ENCODE measurements at regions of chr18 and their contacts with region 1.

Region 1: GRCh38 chr18:63439334-63439733 is 17.1 kb upstream of the VPS4B start:
- DNase-seq: peak in 1 of 2 donors; percentile 52
- ATAC-seq: peak in 7 of 8 donors; percentile 54 to 77 (median 69)
- H3K4me3 ChIP-seq: no peak overlapping the region
- H3K27ac ChIP-seq: no peak overlapping the region
- H3K4me1 ChIP-seq: peaks cover 0 to 16% (median 0%) of the 10 kb centered on the region in 9 donors
- H3K27me3 ChIP-seq: peaks cover 0 to 7% (median 0%) of the 10 kb centered on the region in 7 donors
- CTCF ChIP-seq: peak; percentile 54 to 88 (median 83)

Region 2: DNA sequence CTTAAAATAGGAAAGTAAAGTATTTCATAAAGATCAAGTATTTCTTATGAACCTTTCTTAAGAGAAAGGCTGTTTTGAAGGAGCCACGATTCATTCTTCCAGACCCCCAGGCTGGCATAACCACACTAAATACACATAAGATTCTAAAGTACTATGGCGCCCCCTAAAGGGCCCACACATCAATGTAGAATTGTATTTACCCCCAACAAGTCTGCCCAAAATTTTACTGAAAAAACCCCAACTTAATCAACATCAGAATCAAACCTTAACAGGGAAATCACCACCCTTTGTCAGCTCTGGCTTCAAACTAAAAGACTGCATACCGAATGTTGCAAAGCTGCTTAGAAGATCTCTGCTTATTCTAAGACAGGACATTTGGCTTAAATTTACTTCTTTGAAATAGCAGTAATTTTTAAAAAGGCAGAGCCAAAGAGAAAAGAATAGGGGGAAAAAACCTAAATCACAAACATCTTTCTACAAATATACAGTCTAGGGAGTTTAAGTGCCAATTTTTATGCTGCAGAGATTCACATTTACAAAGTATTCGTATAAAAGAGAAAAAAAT is 99.3 kb before region 1 on chr18:
- intact Hi-C with region 1: loop called in 9 of 10 experiments (anchors 1 to 5 kb)
- DNase-seq: no peak
- ATAC-seq: no peak
- H3K4me3 ChIP-seq: no peak overlapping the region
- H3K27ac ChIP-seq: no peak overlapping the region
- H3K4me1 ChIP-seq: peaks cover 0 to 8% (median 4%) of the 10 kb centered on the region in 9 donors
- H3K27me3 ChIP-seq: no peaks in the 10 kb centered on the region
- CTCF ChIP-seq: peak; percentile 10 to 65 (median 56)

Region 3: DNA sequence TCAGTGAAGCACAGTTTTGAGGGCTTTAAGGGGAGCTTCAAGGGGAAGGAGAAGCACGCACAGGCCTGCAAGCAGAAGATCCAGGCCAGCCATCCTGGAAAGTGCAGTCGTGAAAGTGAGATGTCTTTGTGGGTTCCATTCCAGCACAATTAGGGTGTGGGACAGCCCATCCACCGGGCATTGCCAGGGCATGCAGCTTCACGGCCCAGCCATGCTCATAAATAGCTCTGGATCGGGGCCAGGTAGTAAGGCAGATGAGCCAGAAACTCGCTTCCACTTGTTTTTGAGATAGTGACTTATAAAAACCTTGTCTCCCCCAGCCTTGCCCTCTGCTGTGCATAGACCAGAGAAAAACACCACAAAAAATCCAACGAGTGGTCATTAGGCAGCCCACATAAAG is 93.3 kb before region 1 on chr18:
- intact Hi-C with region 1: loop called in 9 of 10 experiments (anchors 1 to 5 kb)
- DNase-seq: peak; percentile 38 to 70
- ATAC-seq: peak in 7 of 8 donors; percentile 47 to 92 (median 85)
- H3K4me3 ChIP-seq: no peak overlapping the region
- H3K27ac ChIP-seq: peak overlapping the region; percentile 28 to 82 (median 58)
- H3K4me1 ChIP-seq: peaks cover 0 to 32% (median 13%) of the 10 kb centered on the region in 9 donors
- H3K27me3 ChIP-seq: no peaks in the 10 kb centered on the region
- CTCF ChIP-seq: no peak

Region 4: GRCh38 chr18:63378919-63379638 is 60.3 kb before region 1 on chr18:
- intact Hi-C with region 1: no loop called
- DNase-seq: no peak
- ATAC-seq: no peak
- H3K4me3 ChIP-seq: no peak overlapping the region
- H3K27ac ChIP-seq: no peak overlapping the region
- H3K4me1 ChIP-seq: peaks cover 0 to 10% (median 0%) of the 10 kb centered on the region in 9 donors
- H3K27me3 ChIP-seq: no peaks in the 10 kb centered on the region
- CTCF ChIP-seq: no peak

Region 5: GRCh38 chr18:63578357-63578958 is 139.1 kb after region 1 on chr18:
- intact Hi-C with region 1: no loop called
- DNase-seq: no peak
- ATAC-seq: no peak
- H3K4me3 ChIP-seq: no peak overlapping the region
- H3K27ac ChIP-seq: no peak overlapping the region
- H3K4me1 ChIP-seq: peaks cover 0 to 2% (median 0%) of the 10 kb centered on the region in 9 donors
- H3K27me3 ChIP-seq: peaks cover 0 to 6% (median 0%) of the 10 kb centered on the region in 7 donors
- CTCF ChIP-seq: peak; percentile 13 to 75 (median 63)